ENCODE measurements at regions of chr9 and their contacts with region 1.

Region 1: DNA sequence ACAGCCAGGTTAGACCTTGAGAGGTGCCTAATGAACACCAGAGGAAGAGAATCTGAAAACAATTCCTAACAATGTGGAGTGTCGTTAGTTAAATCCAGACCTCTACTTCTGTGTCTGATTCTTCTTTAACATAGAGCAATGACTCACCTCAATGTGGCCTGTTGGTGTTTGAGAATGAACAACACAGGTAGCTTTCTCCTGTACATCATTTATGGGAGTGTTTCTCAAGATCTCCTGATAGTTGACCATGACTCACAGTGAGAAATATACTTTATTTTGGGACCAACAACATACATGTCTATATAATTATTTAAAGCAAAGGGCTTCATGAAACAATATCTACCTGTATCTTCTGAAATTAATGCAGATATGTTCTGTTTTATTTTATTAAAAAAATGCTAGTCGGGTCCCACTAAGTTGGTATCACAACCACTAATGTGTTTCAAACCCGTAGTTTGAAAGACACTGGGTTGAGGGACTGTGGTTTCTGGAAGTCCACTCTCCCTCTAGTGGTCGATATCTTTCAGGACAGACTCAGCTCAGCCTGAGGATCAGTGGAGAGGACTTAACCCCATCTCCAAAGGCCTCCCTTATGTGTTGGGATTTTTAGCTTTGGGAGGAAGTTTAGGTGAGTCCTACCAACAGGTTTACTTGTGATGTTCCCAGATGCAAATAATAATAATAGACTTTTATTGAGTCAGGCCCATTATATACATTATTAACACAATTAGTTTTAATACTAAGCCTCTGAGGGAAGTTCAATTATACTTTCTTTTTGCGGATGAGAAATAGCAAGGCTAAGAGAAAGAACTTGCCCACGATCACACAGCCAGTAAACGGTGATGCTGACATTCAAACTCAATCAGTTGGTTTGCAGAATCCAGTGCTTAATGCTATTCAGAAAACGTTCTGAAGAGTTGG is 70.0 kb upstream of the KLF9 start:
- DNase-seq: peak in 1 of 3 donors; percentile 61
- ATAC-seq: peak; percentile 70
- H3K4me3 ChIP-seq: no peak overlapping the region
- H3K4me1 ChIP-seq: peaks cover 13% of the 10 kb centered on the region
- CTCF ChIP-seq: peak; percentile 51

Region 2: GRCh38 chr9:70352802-70353201 is 131.7 kb before region 1 on chr9:
- intact Hi-C with region 1: loop called in 1 of 2 experiments (anchors 10 kb)
- DNase-seq: no peak
- ATAC-seq: no peak
- H3K4me3 ChIP-seq: no peak overlapping the region
- H3K4me1 ChIP-seq: no peaks in the 10 kb centered on the region
- CTCF ChIP-seq: peak; percentile 39

Region 3: DNA sequence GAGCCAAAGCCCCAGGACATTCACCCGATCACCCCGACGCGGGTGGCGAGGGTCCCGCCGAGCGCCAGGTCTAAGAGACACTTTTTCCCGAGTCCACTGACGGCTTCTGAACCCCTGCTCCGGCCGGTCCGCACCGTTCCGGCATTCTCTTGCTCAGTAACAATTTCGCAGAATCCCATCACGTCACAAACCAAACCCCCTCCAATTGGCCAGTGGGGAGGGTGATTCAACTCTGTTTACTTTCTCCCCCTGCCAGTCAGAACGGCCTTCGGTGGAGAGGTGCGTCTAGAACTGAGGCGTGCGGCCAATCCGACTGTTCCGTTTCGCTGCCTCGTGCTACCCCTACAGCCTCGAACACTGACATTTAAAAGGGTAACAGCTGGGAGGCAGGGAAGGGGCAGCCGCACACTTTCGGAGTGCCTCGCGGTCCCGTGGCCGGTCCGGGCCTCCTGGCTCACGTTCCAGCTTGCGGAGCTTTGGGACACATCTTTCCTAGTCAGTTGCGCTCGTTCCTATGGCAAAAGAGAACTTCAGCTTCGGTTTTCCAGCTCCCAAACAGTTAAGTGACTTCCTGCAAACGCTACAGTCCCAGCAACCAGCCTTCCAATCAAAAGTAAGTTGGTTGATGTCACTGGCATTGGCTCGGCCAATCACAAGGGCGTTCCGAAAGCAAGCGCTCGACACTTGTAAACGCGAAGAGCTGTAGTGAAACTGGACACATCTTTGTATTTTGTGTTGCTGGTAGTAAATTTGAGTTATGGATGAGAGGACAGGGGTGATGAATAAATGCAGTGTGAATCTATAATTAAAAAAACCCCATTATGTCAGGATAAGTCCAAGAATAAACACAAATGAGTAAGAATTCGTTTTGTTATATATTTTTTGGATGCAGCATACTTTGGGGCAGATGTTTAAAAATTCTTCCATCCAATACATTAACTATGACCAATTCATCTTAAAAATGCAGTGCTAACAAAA is 70.4 kb before region 1 on chr9 and contains the start of gene KLF9:
- intact Hi-C with region 1: loop called in 1 of 2 experiments (anchors 5 kb)
- DNase-seq: peak; percentile 90 to 96 (median 92)
- ATAC-seq: peak; percentile 69
- H3K4me3 ChIP-seq: peak within 1 kb of the TSS; percentile 92
- H3K4me1 ChIP-seq: peaks cover 34% of the 10 kb centered on the region
- CTCF ChIP-seq: no peak
- total RNA-seq, gene KLF9: 29.5 to 104 (median 45.4) TPM

Region 4: GRCh38 chr9:70419546-70420266 is 64.8 kb before region 1 on chr9:
- intact Hi-C with region 1: loop called (anchors 5 kb)
- DNase-seq: peak; percentile 93 to 98 (median 97)
- ATAC-seq: peak; percentile 72
- H3K4me3 ChIP-seq: peak overlapping the region; percentile 15
- H3K4me1 ChIP-seq: peaks cover 40% of the 10 kb centered on the region
- CTCF ChIP-seq: no peak

Region 5: DNA sequence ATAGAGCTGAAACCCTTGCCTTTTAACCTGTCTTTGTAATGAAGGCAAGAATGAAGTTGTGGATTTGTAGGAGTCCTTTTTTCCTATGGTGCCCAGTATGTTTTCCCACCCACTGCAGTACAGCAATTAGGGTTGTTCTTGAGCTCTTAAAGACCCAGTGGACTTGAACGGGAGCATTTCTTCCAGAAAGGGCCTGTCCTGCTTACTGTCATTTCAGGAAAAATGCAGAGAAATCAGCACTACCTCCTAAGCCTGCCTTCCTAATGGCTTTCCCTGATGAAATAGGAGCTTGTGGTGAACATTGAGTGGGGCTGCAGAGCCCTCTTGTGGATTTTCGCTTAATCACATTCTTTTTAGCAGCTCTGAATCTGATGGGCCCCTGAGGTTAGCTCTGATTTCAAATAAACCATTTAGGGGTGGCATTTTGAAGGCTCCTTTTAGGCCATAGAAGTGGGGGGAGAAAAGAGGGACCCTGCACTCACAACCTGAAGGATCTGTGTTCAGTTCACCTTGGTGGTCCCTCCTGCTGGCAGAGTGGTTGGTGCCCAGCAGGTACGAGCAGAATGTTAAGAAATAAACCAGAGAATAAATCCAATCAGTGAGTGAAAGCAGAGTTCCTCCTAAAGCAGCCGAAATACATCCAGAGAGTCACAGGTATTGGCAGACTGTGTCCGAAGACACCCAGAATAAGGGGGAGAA is 118.0 kb after region 1 on chr9:
- intact Hi-C with region 1: loop called in 1 of 2 experiments (anchors 5 kb)
- DNase-seq: peak in 1 of 3 donors; percentile 73
- ATAC-seq: peak; percentile 75
- H3K4me3 ChIP-seq: no peak overlapping the region
- H3K4me1 ChIP-seq: peaks cover 2% of the 10 kb centered on the region
- CTCF ChIP-seq: no peak